CD4-positive, alpha-beta memory T cell (primary cell): ENCODE measurements at regions of chr9 and their contacts with region 1.

Region 1: GRCh38 chr9:104747558-104748358 is at the start of gene NIPSNAP3A:
- DNase-seq: peak; percentile 85 to 95 (median 90)
- H3K4me3 ChIP-seq: peak within 1 kb of the TSS; percentile 56 to 89
- H3K4me3 Mint-ChIP-seq: peak within 1 kb of the TSS; percentile 91 to 99 (median 98)
- H3K27ac ChIP-seq: peak within 1 kb of the TSS; percentile 85
- H3K27ac Mint-ChIP-seq: peak within 1 kb of the TSS; percentile 90 to 99 (median 99)
- H3K4me1 ChIP-seq: peaks cover 15% of the 10 kb centered on the region
- H3K4me1 Mint-ChIP-seq: peaks cover 10 to 21% (median 17%) of the 10 kb centered on the region in 4 donors
- H3K27me3 ChIP-seq: no peaks in the 10 kb centered on the region
- H3K27me3 Mint-ChIP-seq: no peaks in the 10 kb centered on the region
- total RNA-seq, gene NIPSNAP3A: 11.3 to 13.6 TPM

Region 2: DNA sequence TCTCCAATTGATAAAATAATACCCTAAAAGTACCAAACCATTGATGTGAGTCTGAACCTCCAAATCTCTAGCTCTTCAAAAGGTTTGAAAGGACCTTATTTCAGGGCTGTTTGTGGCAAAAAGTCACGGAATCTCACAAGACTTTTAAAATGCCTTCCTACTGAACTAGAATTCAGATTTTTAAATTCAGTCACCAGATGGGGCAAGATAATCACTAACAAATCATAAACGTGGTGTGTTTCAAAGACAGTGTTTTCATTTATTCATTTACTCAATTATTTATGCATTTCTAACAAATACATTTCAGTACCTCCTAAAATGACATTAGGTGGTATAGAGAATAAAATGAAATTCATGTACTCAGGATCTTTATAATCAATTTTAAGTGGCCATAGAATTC is 721.8 kb before region 1 on chr9:
- CTCF ChIA-PET with region 1: no interaction called
- POLR2A ChIA-PET with region 1: no interaction called
- intact Hi-C with region 1: loop called (anchors 2 kb)
- DNase-seq: no peak
- H3K4me3 ChIP-seq: no peak overlapping the region
- H3K4me3 Mint-ChIP-seq: no peak overlapping the region
- H3K27ac ChIP-seq: no peak overlapping the region
- H3K27ac Mint-ChIP-seq: no peak overlapping the region
- H3K4me1 ChIP-seq: peaks cover 8% of the 10 kb centered on the region
- H3K4me1 Mint-ChIP-seq: peaks cover 21 to 24% (median 23%) of the 10 kb centered on the region in 4 donors
- H3K27me3 ChIP-seq: no peaks in the 10 kb centered on the region
- H3K27me3 Mint-ChIP-seq: peaks cover 0 to 1% of the 10 kb centered on the region in 2 donors

Region 3: GRCh38 chr9:104093647-104094533 is 653.9 kb before region 1 on chr9 and contains the start of gene SMC2:
- CTCF ChIA-PET with region 1: interaction called, 5 read pairs
- POLR2A ChIA-PET with region 1: interaction called, 15 read pairs
- intact Hi-C with region 1: loop called (anchors 1 kb)
- DNase-seq: peak; percentile 93 to 96 (median 95)
- H3K4me3 ChIP-seq: peak within 1 kb of the TSS; percentile 63 to 90
- H3K4me3 Mint-ChIP-seq: peak within 1 kb of the TSS; percentile 98 to 100 (median 99)
- H3K27ac ChIP-seq: peak within 1 kb of the TSS; percentile 79
- H3K27ac Mint-ChIP-seq: peak within 1 kb of the TSS; percentile 99 to 100 (median 99)
- H3K4me1 ChIP-seq: peaks cover 30% of the 10 kb centered on the region
- H3K4me1 Mint-ChIP-seq: peaks cover 26 to 46% (median 30%) of the 10 kb centered on the region in 4 donors
- H3K27me3 ChIP-seq: no peaks in the 10 kb centered on the region
- H3K27me3 Mint-ChIP-seq: peaks cover 0 to 3% of the 10 kb centered on the region in 2 donors
- total RNA-seq, gene SMC2: 9.7 to 10.4 TPM

Region 4: DNA sequence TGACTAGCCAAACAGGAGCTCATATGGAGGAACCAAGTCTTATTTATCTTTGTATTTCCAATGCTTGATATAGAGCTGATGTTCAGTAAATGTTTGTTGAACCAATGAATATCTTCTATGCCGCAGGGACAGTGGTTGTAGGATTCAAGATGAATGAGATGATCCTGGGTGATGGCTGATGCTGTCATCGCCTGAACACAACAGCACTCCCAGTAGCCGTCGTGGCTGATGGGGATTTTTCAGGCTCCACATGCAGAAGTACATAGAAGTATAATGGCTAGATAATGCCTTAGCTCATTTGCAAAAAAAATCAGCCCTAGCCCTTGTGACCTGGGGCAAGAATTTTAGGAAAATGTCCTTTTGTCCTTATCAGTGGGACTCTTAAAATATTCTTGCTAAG is 312.7 kb before region 1 on chr9:
- CTCF ChIA-PET with region 1: no interaction called
- POLR2A ChIA-PET with region 1: no interaction called
- intact Hi-C with region 1: no loop called
- DNase-seq: no peak
- H3K4me3 ChIP-seq: no peak overlapping the region
- H3K4me3 Mint-ChIP-seq: no peak overlapping the region
- H3K27ac ChIP-seq: no peak overlapping the region
- H3K27ac Mint-ChIP-seq: no peak overlapping the region
- H3K4me1 ChIP-seq: no peaks in the 10 kb centered on the region
- H3K4me1 Mint-ChIP-seq: no peaks in the 10 kb centered on the region
- H3K27me3 ChIP-seq: no peaks in the 10 kb centered on the region
- H3K27me3 Mint-ChIP-seq: no peaks in the 10 kb centered on the region

Region 5: DNA sequence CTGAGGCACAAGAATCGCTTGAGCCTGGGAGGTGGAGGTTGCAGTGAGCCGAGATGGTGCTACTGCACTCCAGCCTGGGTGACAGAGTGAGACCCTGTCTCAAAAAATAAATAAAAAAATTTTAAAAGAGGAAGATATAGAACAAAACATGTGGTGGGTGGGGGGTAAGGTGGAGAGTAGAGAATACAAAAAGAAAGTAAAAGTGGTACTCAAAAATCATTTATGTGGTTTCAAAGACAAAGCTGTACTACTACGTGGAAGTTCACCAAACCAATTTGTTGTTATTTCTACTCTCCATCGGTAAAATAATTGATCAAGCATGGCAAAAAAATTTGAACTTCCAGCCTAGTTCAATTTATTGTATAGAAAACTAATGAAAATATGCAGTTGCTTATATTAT is 203.1 kb before region 1 on chr9:
- CTCF ChIA-PET with region 1: no interaction called
- POLR2A ChIA-PET with region 1: no interaction called
- intact Hi-C with region 1: no loop called
- DNase-seq: no peak
- H3K4me3 ChIP-seq: no peak overlapping the region
- H3K4me3 Mint-ChIP-seq: no peak overlapping the region
- H3K27ac ChIP-seq: no peak overlapping the region
- H3K27ac Mint-ChIP-seq: no peak overlapping the region
- H3K4me1 ChIP-seq: no peaks in the 10 kb centered on the region
- H3K4me1 Mint-ChIP-seq: no peaks in the 10 kb centered on the region
- H3K27me3 ChIP-seq: no peaks in the 10 kb centered on the region
- H3K27me3 Mint-ChIP-seq: no peaks in the 10 kb centered on the region

Region 6: DNA sequence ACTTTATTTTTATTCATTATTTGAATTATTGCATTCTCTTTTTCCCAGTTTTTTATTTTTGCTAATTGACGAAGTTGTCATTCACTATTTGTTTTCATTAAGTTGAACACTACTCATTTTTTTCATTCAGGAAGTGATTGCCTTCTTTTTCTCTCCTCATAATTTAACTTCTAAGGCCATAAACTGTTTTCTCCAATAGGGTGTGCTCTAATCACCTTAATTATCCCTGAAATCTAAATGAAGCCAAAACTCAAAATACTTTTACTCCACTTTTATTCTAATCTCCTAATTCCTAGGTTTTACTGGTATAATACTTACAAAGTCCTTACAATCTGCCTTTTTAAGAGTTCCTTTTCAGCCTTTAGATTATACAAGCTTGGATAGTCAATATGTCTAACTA is 139.4 kb before region 1 on chr9:
- CTCF ChIA-PET with region 1: no interaction called
- POLR2A ChIA-PET with region 1: no interaction called
- intact Hi-C with region 1: no loop called
- DNase-seq: no peak
- H3K4me3 ChIP-seq: no peak overlapping the region
- H3K4me3 Mint-ChIP-seq: no peak overlapping the region
- H3K27ac ChIP-seq: no peak overlapping the region
- H3K27ac Mint-ChIP-seq: no peak overlapping the region
- H3K4me1 ChIP-seq: no peaks in the 10 kb centered on the region
- H3K4me1 Mint-ChIP-seq: no peaks in the 10 kb centered on the region
- H3K27me3 ChIP-seq: no peaks in the 10 kb centered on the region
- H3K27me3 Mint-ChIP-seq: peaks cover 0 to 2% of the 10 kb centered on the region in 2 donors

Region 7: DNA sequence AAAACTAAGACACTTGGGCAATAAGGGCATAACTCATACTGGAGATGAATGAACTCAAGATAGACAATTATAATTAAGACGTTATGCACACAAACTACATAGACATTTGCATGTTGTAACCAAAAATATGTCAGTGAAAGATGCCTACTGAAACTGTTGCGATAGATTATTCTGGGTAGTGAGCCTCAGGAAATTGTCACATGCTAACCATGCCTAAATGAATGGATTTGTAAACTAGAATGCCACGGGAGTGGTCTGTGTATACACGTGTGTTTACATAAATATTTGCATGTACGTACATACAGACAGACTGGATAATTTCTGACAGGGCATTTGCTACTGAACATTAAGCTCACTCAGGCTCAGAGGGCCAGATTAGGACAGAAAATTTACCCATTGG is 17.4 kb after region 1 on chr9:
- CTCF ChIA-PET with region 1: interaction called, 13 read pairs
- POLR2A ChIA-PET with region 1: interaction called, 66 read pairs
- intact Hi-C with region 1: loop called (anchors 2 kb)
- DNase-seq: no peak
- H3K4me3 ChIP-seq: no peak overlapping the region
- H3K4me3 Mint-ChIP-seq: peak overlapping the region; percentile 91 to 97 (median 94)
- H3K27ac ChIP-seq: no peak overlapping the region
- H3K27ac Mint-ChIP-seq: peak overlapping the region in 2 of 7 donors; percentile 13 to 30
- H3K4me1 ChIP-seq: peaks cover 6% of the 10 kb centered on the region
- H3K4me1 Mint-ChIP-seq: peaks cover 5 to 9% (median 6%) of the 10 kb centered on the region in 4 donors
- H3K27me3 ChIP-seq: no peaks in the 10 kb centered on the region
- H3K27me3 Mint-ChIP-seq: no peaks in the 10 kb centered on the region

Region 8: DNA sequence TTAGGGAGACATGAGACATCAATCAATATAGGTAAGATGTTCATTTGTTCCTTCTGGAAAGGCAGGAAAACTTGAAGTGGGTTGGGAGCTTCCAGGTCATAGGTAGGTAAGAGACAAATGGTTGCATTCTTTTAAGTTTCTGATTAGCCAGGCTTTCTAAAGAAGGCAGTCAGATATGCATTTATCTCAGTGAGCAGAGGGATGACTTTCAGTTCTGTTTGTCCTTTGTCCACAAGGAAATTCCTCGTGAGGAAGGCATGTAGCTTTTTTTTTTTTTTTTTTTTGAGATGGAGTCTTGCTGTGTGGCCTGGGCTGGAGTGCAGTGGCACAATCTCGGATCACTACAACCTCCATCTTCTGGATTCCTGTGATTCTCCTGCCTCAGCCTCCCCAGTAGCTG is 335.5 kb after region 1 on chr9:
- CTCF ChIA-PET with region 1: no interaction called
- POLR2A ChIA-PET with region 1: no interaction called
- intact Hi-C with region 1: no loop called
- DNase-seq: no peak
- H3K4me3 ChIP-seq: no peak overlapping the region
- H3K4me3 Mint-ChIP-seq: no peak overlapping the region
- H3K27ac ChIP-seq: no peak overlapping the region
- H3K27ac Mint-ChIP-seq: no peak overlapping the region
- H3K4me1 ChIP-seq: no peaks in the 10 kb centered on the region
- H3K4me1 Mint-ChIP-seq: no peaks in the 10 kb centered on the region
- H3K27me3 ChIP-seq: no peaks in the 10 kb centered on the region
- H3K27me3 Mint-ChIP-seq: no peaks in the 10 kb centered on the region

Region 9: GRCh38 chr9:105414947-105415661 is 667.3 kb after region 1 on chr9:
- CTCF ChIA-PET with region 1: no interaction called
- POLR2A ChIA-PET with region 1: no interaction called
- intact Hi-C with region 1: loop called (anchors 1 kb)
- DNase-seq: peak; percentile 51 to 64 (median 58)
- H3K4me3 ChIP-seq: no peak overlapping the region
- H3K4me3 Mint-ChIP-seq: no peak overlapping the region
- H3K27ac ChIP-seq: no peak overlapping the region
- H3K27ac Mint-ChIP-seq: no peak overlapping the region
- H3K4me1 ChIP-seq: no peaks in the 10 kb centered on the region
- H3K4me1 Mint-ChIP-seq: no peaks in the 10 kb centered on the region
- H3K27me3 ChIP-seq: peaks cover 6% of the 10 kb centered on the region
- H3K27me3 Mint-ChIP-seq: peaks cover 29 to 33% of the 10 kb centered on the region in 2 donors

Region 10: GRCh38 chr9:105447814-105448812 is 700.4 kb after region 1 on chr9 and contains the start of gene FSD1L:
- CTCF ChIA-PET with region 1: no interaction called
- POLR2A ChIA-PET with region 1: no interaction called
- intact Hi-C with region 1: loop called (anchors 1 kb)
- DNase-seq: peak; percentile 70 to 78 (median 74)
- H3K4me3 ChIP-seq: peak within 1 kb of the TSS; percentile 63 to 71
- H3K4me3 Mint-ChIP-seq: peak within 1 kb of the TSS; percentile 84 to 89 (median 88)
- H3K27ac ChIP-seq: peak within 1 kb of the TSS; percentile 45
- H3K27ac Mint-ChIP-seq: peak within 1 kb of the TSS in 6 of 7 donors; percentile 35 to 83 (median 73)
- H3K4me1 ChIP-seq: peaks cover 14% of the 10 kb centered on the region
- H3K4me1 Mint-ChIP-seq: peaks cover 7 to 12% (median 9%) of the 10 kb centered on the region in 4 donors
- H3K27me3 ChIP-seq: no peaks in the 10 kb centered on the region
- H3K27me3 Mint-ChIP-seq: no peaks in the 10 kb centered on the region
- total RNA-seq, gene FSD1L: 1.6 TPM

Region 11: DNA sequence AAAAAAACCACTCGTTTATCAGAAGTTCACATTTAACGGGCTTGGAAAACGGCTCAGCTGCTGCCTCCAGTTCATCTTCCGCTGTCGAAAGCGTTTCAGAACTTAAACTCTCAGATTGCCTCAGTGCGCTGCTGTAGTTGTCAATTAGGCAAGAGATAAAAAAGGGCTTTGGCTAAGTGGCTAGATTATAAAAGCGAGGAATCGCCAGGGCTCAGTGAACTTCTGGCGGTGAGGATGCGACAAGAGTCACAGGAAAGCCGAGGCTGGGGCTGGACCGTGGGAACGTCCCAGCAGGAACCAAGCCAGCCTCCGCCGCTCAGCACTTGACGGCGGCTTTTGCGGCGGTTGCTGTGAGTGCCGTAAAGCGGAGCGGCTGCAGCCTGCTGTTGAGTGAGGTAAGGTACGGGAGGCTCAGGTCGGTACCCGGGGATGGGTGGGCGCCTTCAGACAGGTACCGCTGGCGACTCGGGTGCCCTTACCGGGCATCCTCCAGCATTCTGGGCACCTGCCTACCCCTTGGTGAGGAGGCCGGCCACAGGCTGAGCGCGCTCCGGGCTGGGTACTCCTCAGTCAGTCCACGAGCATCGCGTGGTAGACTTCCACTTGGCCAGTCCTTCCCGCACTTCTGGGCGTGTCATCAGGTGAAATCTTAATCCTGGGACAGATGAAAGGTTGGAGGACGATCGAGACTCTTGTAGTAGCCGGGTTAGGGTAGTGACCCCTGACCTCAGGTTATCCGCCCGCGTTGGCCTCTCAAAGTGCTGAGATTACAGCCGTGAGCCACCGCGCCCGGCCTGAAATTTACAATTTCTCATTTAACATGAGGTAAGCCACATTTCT is 810.2 kb after region 1 on chr9 and contains the start of gene FKTN:
- CTCF ChIA-PET with region 1: no interaction called
- POLR2A ChIA-PET with region 1: no interaction called
- intact Hi-C with region 1: loop called (anchors 5 kb)
- DNase-seq: peak; percentile 81 to 86 (median 83)
- H3K4me3 ChIP-seq: peak within 1 kb of the TSS; percentile 76 to 77
- H3K4me3 Mint-ChIP-seq: peak within 1 kb of the TSS; percentile 89 to 97 (median 96)
- H3K27ac ChIP-seq: peak within 1 kb of the TSS; percentile 46
- H3K27ac Mint-ChIP-seq: peak within 1 kb of the TSS; percentile 74 to 95 (median 90)
- H3K4me1 ChIP-seq: peaks cover 10% of the 10 kb centered on the region
- H3K4me1 Mint-ChIP-seq: peaks cover 14 to 24% (median 20%) of the 10 kb centered on the region in 4 donors
- H3K27me3 ChIP-seq: no peaks in the 10 kb centered on the region
- H3K27me3 Mint-ChIP-seq: no peaks in the 10 kb centered on the region
- total RNA-seq, gene FKTN: 13.9 to 14.2 TPM